H1 (cell line): ENCODE measurements at regions of chr10 and their contacts with region 1.

Region 1: DNA sequence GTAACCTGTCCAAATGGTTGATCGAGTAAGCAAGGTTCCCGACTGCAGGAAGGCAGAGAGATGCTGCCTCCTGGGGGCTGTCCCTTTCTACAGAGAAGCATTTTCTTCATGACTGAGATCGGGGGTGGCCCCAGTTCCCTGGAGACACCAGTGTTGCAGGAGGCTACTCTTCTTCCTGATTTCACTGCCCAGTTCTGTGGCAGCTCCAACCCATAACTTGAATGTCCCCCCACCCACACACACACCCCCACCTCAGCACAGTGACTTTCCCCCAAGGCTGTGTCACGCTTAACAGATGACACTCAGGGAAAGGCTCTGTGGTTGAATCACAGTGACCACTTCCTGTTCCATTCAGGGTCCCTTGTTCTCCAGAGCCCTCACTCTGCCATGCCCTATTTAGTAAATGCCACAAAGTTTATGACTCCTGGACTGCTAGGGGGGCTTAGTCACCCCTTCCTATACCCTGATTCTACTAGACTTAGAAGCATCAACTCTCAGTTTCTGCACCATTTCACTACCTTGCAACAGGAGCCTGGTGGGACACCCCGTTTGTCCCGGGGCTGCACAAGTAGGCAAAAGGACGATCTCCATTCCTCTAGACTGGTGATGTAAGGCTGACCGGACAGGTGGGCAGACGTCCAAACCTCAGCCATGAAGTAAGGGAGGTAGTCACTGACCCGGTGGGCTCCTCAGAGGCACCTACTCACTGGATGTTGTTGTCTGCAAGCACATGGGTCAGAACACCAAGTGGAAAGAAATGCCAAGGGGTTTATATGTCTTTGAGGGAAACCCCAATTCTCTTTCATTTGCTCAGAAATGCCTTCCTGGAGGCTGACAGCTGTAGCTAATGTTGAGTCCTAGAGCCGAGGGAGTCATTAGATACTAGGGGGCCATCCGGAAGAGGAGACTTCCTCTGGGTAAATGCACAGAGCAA is 31.3 kb upstream of the SMC3 start:
- DNase-seq: no peak
- H3K4me3 ChIP-seq: no peak overlapping the region
- H3K27ac ChIP-seq: no peak overlapping the region
- H3K4me1 ChIP-seq: peaks cover 0 to 3% (median 0%) of the 10 kb centered on the region in 4 experiments; a peak in 2 of 7 replicates
- H3K27me3 ChIP-seq: no peaks in the 10 kb centered on the region
- CTCF ChIP-seq: peak; percentile 36 to 55 (median 47)
- EP300 ChIP-seq: no peak
- POLR2A ChIP-seq: no peak
- RAD21 ChIP-seq: peak; percentile 80

Region 2: DNA sequence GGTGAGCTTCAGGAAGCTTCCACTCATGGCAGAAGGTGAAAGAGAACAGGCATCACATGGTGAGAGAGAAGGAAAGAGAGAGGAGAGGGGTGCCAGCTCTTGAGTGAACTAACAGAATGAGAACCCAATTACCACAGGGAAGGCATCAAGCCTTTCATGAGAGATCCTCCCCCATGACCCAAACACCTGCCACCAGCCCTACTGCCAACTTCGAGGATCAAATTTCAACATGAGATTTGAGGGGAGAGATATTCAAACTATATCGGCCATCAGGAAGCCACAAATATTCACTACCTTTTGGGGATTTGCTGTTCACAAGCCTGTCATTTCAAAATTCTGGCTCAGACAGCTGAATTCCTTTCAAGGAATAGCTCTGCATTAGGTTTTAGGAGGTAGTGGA is 191.6 kb before region 1 on chr10:
- CTCF ChIA-PET with region 1: interaction called, 11 read pairs
- POLR2A ChIA-PET with region 1: no interaction called
- DNase-seq: no peak
- H3K4me3 ChIP-seq: no peak overlapping the region
- H3K27ac ChIP-seq: no peak overlapping the region
- H3K4me1 ChIP-seq: peaks cover 0 to 3% (median 0%) of the 10 kb centered on the region in 4 experiments; a peak in 1 of 7 replicates
- H3K27me3 ChIP-seq: no peaks in the 10 kb centered on the region
- CTCF ChIP-seq: no peak
- EP300 ChIP-seq: no peak
- POLR2A ChIP-seq: no peak
- RAD21 ChIP-seq: no peak